Lower leg skin (tissue), 4 donors: ENCODE measurements at regions of chr6 and their contacts with region 1.

Region 1: DNA sequence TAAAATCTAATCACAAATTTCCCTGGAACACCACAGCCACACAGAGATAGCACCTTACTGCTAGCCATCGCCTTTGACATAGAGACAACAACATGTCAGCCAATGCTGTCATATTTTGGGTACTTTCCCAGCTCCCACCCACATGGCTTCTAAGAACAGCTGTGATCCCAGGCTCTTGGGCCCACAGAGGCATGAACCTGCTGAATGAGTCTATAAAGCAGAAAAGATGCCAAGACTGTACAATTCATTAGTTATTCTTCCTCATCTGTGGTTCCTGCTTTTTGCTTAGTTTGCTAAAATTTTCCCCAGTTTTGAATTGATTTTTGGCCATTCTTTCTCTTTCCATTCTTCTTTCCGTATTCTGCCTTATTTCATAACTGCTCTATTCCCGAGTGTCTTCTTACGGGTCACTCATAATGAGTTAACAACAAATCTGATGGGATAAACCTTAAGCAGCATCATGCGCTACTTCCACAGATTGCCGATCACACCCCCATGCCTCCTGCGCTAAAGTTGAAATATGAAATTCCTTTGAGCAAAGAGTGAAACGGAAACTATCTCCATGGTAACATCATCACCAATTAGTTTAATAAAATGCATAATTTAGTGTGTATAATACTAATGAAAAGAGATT is 327.3 kb upstream of the HSF2 start:
- DNase-seq: no peak
- H3K4me3 ChIP-seq: no peak overlapping the region
- CTCF ChIP-seq: no peak
- POLR2A ChIP-seq: no peak

Region 2: GRCh38 chr6:122049341-122049740 is 22.8 kb before region 1 on chr6:
- intact Hi-C with region 1: loop called (anchors 1 kb)
- DNase-seq: no peak
- H3K4me3 ChIP-seq: no peak overlapping the region
- CTCF ChIP-seq: no peak
- POLR2A ChIP-seq: no peak